Activated T-helper 2 cell treated with anti-CD3 and anti-CD28 coated beads, Interferon-gamma antibody, Interleukin-2, Interleukin-4, amounts not matched to agents 10 μg/mL and 5 μg/mL and 100 μg/mL, durations not matched to agents 14 hours and 24 hours and 36 hours (primary cell): ENCODE measurements at regions of chr7 and their contacts with region 1.

Region 1: DNA sequence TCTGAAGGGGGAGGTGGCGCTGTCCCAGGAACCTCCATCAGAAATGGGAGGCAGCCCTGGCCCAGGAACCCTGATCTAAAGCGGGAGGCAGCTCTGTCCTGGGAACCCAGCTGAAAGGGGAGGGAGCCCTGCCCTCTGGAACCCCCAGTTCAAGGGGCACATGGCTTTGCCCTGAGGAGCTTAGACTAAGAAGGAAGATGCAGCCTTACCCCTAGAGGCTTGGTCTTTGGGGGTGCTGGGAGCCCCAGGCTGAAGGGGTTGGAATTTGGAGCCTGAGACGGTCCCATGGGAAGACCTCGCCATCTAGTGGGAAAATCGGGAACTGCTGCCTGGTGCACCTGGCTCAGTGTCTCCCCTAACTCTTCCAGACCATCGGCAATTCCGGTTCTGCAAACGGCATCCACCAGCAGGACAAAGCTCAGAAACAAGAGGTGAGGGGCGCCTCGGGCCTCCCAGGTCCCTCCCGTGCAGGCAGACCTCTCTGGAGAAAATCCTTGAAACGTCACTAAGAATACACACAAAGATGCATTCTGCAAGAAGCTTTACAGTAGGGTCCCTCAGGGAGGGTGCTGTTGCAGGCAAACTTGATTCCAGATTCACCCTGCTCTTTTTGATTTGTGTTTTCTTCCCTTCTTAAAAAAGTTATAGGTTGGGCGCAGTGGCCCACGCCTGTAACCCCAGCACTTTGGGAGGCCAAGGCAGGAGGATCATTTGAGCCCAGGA is 52.4 kb upstream of the GTF2IRD1 start:
- DNase-seq: peak; percentile 55
- H3K4me3 Mint-ChIP-seq: no peak overlapping the region
- H3K27ac Mint-ChIP-seq: no peak overlapping the region
- H3K4me1 Mint-ChIP-seq: no peaks in the 10 kb centered on the region
- H3K27me3 Mint-ChIP-seq: no peaks in the 10 kb centered on the region

Region 2: GRCh38 chr7:74068393-74069085 is 332.8 kb before region 1 on chr7:
- intact Hi-C with region 1: loop called (anchors 1 kb)
- DNase-seq: no peak
- H3K4me3 Mint-ChIP-seq: no peak overlapping the region
- H3K27ac Mint-ChIP-seq: no peak overlapping the region
- H3K4me1 Mint-ChIP-seq: peaks cover 4% of the 10 kb centered on the region
- H3K27me3 Mint-ChIP-seq: no peaks in the 10 kb centered on the region